ENCODE measurements at regions of chr7 and their contacts with region 1.

Region 1: DNA sequence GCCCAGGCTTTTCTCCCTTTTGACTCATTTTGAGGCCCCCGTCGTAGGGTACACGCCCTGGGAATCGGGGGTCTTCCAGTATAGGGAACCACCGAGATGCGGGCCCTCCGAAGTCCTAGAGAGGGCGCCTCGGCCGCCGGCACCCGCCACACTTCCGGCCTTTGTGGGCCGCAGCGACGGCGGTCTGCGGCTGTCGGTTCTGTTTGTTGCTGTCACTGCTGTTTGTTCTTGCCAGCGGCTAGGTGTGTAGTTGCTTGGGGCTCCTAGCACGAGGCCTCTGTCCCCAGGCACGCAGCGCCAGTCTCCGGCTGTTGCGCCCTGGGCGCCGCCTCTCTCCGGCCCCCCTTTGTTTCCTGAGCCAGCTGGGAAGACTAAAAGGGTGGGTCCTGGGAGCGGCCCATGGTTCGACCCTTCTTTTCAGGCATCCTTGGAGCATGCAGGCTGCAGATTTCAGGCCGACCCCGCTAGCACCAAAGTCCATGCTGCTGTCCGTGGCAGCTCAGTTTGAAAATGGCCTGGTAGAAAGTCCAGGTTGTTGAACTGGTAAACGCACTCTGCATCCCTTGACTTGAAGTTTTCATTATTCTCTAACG is 17.8 kb upstream of the ZKSCAN1 start:
- DNase-seq: peak; percentile 34 to 45 (median 40)
- H3K4me3 ChIP-seq: peak overlapping the region; percentile 47 to 75 (median 58)
- H3K4me3 Mint-ChIP-seq: peak overlapping the region; percentile 81 to 88
- H3K27ac ChIP-seq: peak overlapping the region; percentile 32 to 56
- H3K27ac Mint-ChIP-seq: peak overlapping the region; percentile 49 to 89 (median 84)
- H3K4me1 ChIP-seq: peaks cover 17 to 24% of the 10 kb centered on the region in 2 donors
- H3K4me1 Mint-ChIP-seq: peaks cover 25% of the 10 kb centered on the region
- H3K27me3 ChIP-seq: no peaks in the 10 kb centered on the region
- H3K27me3 Mint-ChIP-seq: peaks cover 0 to 9% (median 6%) of the 10 kb centered on the region in 3 donors
- CTCF ChIP-seq: peak; percentile 22

Region 2: GRCh38 chr7:100049441-100050311 is 52.0 kb after region 1 on chr7 and contains the start of gene ZSCAN21:
- intact Hi-C with region 1: loop called in 1 of 2 experiments (anchors 10 kb)
- DNase-seq: peak; percentile 81 to 89 (median 84)
- H3K4me3 ChIP-seq: peak within 1 kb of the TSS; percentile 83 to 97 (median 87)
- H3K4me3 Mint-ChIP-seq: peak within 1 kb of the TSS; percentile 86 to 93
- H3K27ac ChIP-seq: peak within 1 kb of the TSS; percentile 88 to 96
- H3K27ac Mint-ChIP-seq: peak within 1 kb of the TSS; percentile 88 to 98 (median 95)
- H3K4me1 ChIP-seq: peaks cover 14 to 18% of the 10 kb centered on the region in 2 donors
- H3K4me1 Mint-ChIP-seq: peaks cover 14% of the 10 kb centered on the region
- H3K27me3 ChIP-seq: no peaks in the 10 kb centered on the region
- H3K27me3 Mint-ChIP-seq: peaks cover 2 to 6% (median 2%) of the 10 kb centered on the region in 3 donors
- CTCF ChIP-seq: peak; percentile 25
- polyA plus RNA-seq, gene ZSCAN21: 1.5 to 4.6 (median 4.4) TPM